Activated T-helper 1 cell treated with anti-CD3 and anti-CD28 coated beads, Interleukin-12 subunit alpha, Interleukin-12 subunit beta, Interleukin-2, Interleukin-4 antibody, amounts not matched to agents 30 ng/mL and 10 ng/mL and 1 ng/mL, durations not matched to agents 14 hours and 24 hours and 36 hours (primary cell): ENCODE measurements at regions of chr2 and their contacts with region 1.

Region 1: GRCh38 chr2:158456309-158457066 is at the starts of genes CCDC148 and PKP4:
- DNase-seq: peak; percentile 87
- H3K4me3 Mint-ChIP-seq: peak within 1 kb of the TSS; percentile 98
- H3K27ac Mint-ChIP-seq: peak within 1 kb of the TSS; percentile 92
- H3K4me1 Mint-ChIP-seq: peaks cover 23% of the 10 kb centered on the region
- H3K27me3 Mint-ChIP-seq: peaks cover 29% of the 10 kb centered on the region
- total RNA-seq, gene CCDC148: 0.36 TPM in 1 of 2 replicates, not detected in the other
- total RNA-seq, gene PKP4: 28.4 and 30.3 TPM in 2 replicates

Region 2: DNA sequence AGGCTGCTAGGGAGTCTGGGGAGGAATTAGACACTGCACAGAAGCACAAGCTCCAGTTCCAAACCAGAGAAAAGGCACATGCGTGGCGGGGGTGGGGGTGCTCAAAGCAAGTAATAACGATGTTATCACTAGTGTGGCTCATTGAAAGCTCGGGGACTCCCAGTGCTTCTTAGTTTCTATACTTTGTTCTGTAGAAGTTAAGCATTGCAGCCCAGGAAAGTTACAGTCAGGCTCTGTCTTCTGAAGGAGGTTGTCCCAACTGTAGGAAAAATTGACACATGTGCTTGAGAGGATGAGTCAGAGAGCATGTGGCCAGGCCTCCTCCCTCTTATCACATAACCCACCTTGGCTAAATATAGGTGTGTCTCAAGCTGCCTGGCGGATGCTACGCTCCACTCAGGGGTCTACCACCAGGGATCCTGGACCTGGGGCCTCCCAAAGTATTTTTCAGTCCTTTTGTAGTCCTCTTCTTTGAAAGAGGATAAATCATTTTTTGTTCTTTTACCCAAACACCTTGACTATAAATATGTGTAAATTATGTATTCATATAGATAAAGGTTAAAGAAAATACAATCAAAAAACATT is 1195.2 kb before region 1 on chr2:
- intact Hi-C with region 1: loop called (anchors 5 kb)
- DNase-seq: peak; percentile 12
- H3K4me3 Mint-ChIP-seq: peak overlapping the region; percentile 57
- H3K27ac Mint-ChIP-seq: peak overlapping the region; percentile 86
- H3K4me1 Mint-ChIP-seq: peaks cover 37% of the 10 kb centered on the region
- H3K27me3 Mint-ChIP-seq: peaks cover 2% of the 10 kb centered on the region

Region 3: DNA sequence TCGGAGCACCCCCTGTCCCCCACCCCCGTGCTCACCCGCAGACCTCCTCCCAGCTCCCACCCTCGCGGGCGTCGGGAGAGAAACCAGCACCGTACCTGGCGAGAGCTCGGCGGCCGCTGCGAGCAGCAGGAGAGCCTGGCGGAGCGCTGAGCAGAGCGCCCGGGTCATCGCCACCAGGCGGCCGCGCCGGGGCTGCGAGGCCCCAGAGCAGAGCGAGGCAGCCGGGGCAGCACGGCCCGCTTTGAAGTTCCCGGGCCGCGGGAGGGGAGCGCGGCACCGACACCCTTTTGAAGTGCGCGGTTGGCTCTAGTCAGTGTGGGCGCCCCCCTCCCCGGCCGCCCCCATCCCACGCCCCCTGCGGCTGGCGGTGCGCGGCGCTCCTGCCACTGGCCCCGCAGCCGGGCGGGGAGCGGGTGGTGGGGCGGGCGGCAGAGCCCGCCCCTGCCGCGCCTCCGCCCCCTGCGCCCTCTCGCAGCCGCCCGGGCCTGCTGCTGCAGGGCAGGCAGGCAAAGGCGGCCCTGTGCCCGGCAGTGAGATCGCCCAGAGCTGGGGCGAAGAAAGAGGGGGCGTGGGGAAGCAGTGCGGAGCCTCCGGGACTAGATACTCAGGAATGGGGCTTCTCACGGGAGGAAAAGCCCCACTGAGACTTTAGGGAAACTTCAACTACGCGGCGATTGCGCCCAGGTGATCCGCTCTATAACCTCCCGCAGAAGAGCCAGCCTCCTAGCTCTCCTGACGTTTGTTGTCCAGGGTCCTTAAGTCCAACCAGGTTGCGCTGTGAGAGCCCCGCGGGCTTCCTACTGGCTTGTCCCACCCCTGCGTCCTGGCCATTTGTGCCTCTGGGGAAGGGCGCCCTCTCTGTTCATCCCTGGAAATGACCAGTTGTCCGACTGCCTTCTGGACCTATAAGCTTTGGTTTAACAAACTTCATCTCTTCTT is 827.7 kb before region 1 on chr2 and contains the start of gene ACVR1C:
- intact Hi-C with region 1: loop called (anchors 2 kb)
- DNase-seq: peak; percentile 63
- H3K4me3 Mint-ChIP-seq: peak within 1 kb of the TSS; percentile 88
- H3K27ac Mint-ChIP-seq: peak within 1 kb of the TSS; percentile 55
- H3K4me1 Mint-ChIP-seq: peaks cover 28% of the 10 kb centered on the region
- H3K27me3 Mint-ChIP-seq: peaks cover 15% of the 10 kb centered on the region
- total RNA-seq, gene ACVR1C: 0.59 and 1.1 TPM in 2 replicates

Region 4: DNA sequence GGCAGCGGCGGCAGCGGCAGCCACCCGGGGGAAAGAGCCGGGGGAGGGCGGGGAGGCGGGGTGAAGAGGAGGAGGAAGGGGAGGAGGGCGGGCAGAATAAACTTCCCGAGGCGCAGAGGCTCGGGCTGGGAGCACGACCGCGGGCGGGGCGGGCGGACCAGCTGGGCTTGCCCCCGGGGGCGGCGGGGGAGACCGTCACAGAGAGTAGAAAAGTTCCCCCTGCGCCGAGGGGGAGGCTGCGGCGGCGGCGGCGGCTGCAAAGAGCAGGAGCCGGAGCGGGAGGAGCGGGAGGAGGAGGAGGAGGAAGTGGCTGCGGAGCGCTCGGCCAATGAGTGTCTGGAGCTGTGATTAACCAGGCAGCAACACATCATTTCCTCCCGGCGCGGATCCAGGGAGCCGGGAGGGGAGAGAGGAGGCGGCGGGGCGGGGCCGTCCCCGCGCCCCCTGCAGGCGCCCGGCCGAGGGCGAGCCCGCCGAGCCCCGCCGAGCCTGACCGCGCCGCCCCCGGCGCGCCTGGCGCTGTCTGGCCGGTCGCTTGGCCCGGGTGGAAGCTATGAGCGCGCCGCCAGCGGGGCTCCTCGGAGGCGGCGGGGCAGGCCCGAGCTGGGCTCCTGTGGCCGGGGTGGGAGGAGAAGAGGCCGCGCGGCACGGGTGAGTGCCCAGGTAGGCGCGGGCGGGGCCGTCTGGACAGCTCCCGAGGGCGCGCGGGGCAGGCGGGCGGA is 580.3 kb before region 1 on chr2 and contains the start of gene ACVR1:
- intact Hi-C with region 1: loop called (anchors 2 kb)
- DNase-seq: peak; percentile 80
- H3K4me3 Mint-ChIP-seq: peak within 1 kb of the TSS; percentile 98
- H3K27ac Mint-ChIP-seq: peak within 1 kb of the TSS; percentile 96
- H3K4me1 Mint-ChIP-seq: peaks cover 65% of the 10 kb centered on the region
- H3K27me3 Mint-ChIP-seq: no peaks in the 10 kb centered on the region
- total RNA-seq, gene ACVR1: 44.0 and 46.5 TPM in 2 replicates

Region 5: GRCh38 chr2:157967856-157968255 is 488.6 kb before region 1 on chr2:
- intact Hi-C with region 1: no loop called
- DNase-seq: no peak
- H3K4me3 Mint-ChIP-seq: no peak overlapping the region
- H3K27ac Mint-ChIP-seq: no peak overlapping the region
- H3K4me1 Mint-ChIP-seq: no peaks in the 10 kb centered on the region
- H3K27me3 Mint-ChIP-seq: peaks cover 3% of the 10 kb centered on the region

Region 6: DNA sequence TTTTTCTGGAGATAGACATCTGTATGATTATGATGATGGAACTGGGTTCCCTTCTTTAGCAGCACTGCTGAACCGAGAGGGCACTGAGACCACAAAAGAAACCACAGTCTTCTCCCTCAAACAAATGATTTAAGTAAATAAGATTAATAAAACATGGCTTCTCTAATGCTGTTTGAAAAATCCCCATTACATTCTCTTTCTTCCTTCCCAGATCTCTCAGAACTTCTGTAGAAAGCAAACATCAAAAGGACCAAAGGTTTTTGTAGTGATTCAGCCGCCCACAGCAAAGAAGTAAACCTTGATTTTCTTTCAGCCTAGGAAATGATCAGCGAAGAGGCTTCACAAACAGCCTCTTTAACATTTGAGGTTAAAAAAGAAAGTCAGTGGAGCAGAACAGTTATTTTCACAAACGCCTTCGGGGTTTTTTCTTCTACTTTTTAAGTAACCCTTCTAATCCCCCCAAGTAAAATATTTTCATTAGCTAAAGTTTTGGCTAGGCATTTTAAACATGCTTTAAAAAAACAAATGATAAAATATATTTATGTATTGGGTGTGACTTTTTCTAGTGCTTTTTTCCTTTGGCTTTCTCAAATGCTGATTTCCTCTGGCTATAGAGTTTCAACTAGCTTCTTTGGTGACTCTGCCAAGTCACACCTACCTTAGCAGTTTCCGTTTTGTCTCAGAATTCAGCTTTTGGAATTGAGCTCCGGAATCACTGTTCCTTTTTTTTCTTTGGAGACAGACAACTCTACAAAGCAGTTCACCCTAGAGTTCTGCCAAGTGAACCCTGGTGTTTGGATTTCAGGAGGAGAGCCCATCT is 265.2 kb before region 1 on chr2:
- intact Hi-C with region 1: loop called (anchors 1 kb)
- DNase-seq: peak; percentile 6
- H3K4me3 Mint-ChIP-seq: peak overlapping the region; percentile 50
- H3K27ac Mint-ChIP-seq: peak overlapping the region; percentile 40
- H3K4me1 Mint-ChIP-seq: peaks cover 28% of the 10 kb centered on the region
- H3K27me3 Mint-ChIP-seq: peaks cover 24% of the 10 kb centered on the region

Region 7: DNA sequence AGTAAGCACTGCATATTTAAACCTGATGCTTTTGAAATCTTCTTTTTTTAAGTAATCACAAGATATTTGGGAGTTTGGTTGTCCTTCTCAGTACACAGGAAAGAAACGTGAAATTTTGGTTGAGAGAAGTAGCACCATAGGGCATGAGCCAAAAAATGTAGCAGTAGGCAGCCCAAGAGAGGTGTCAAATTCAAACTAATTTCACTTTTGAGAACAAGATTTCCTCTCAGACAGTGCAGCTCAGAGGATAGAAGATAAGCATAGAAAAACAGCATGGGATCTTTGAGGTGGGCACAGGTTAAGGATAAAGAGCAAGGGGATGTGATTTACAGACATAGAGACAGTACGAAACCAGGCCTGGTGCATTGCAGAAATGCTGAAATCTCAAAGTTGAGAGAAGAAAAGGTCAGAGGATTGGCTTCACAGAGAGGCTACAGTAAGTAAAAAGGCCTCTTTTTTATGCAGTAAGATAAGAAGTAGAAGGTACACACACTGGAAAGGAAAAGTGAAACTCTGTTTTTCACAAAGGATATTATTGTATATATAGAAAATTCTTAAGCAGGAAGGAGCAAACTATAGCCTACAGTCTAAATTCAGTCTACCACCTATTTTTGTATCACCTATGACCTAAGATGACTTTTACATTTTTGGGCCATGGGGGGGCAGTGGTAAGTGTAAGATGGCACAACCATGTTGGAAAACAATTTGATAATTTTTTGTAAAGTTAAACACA is 90.1 kb after region 1 on chr2:
- intact Hi-C with region 1: loop called (anchors 5 kb)
- DNase-seq: no peak
- H3K4me3 Mint-ChIP-seq: no peak overlapping the region
- H3K27ac Mint-ChIP-seq: peak overlapping the region; percentile 30
- H3K4me1 Mint-ChIP-seq: peaks cover 16% of the 10 kb centered on the region
- H3K27me3 Mint-ChIP-seq: no peaks in the 10 kb centered on the region

Region 8: GRCh38 chr2:158557752-158558151 is 101.3 kb after region 1 on chr2:
- intact Hi-C with region 1: no loop called
- DNase-seq: no peak
- H3K4me3 Mint-ChIP-seq: no peak overlapping the region
- H3K27ac Mint-ChIP-seq: no peak overlapping the region
- H3K4me1 Mint-ChIP-seq: no peaks in the 10 kb centered on the region
- H3K27me3 Mint-ChIP-seq: no peaks in the 10 kb centered on the region

Region 9: DNA sequence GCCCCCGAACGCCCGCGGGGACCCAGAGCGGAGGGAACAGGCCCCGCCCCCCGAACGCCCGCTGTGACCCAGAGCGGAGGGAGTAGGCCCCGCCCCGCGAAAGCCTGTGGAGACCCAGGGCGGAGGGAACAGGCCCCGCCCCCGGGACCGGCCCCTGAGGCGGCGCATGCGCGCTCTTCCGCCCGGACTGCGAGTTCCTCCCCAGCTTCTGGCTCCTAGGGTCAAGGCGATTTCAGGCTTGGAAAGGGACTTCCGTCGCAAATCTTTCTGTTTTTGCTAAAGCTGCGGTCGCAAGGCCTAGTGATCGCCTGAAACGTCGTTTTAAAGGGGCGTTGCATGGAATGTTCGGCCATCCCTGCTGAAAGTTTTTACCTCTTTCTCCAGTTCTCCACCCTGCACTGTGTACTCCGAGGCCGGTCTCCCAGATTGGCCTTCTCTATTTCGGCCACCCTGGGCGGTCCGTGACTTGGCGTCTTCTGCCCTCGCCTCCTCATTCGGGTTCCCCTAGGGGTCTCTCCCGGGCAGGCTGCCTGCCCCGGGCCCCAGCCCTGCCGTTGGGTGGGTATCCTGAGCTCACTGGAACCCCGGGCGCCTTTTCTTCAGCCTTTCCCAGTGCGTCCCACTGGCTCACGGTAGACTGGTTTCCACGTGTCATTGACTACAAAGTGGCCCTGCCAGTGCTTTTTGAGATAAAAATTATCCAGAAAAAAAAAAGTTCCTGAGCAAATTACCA is 830.4 kb after region 1 on chr2:
- intact Hi-C with region 1: loop called (anchors 5 kb)
- DNase-seq: peak; percentile 95
- H3K4me3 Mint-ChIP-seq: peak overlapping the region; percentile 84
- H3K27ac Mint-ChIP-seq: peak overlapping the region; percentile 76
- H3K4me1 Mint-ChIP-seq: peaks cover 28% of the 10 kb centered on the region
- H3K27me3 Mint-ChIP-seq: no peaks in the 10 kb centered on the region